Ascending aorta (tissue), 2 donors: ENCODE measurements at regions of chr18 and their contacts with region 1.

Region 1: GRCh38 chr18:79644006-79644665 is 35.5 kb upstream of the CTDP1 start:
- DNase-seq: no peak
- H3K4me3 ChIP-seq: no peak overlapping the region
- H3K27ac ChIP-seq: no peak overlapping the region
- H3K4me1 ChIP-seq: peaks cover 0 to 2% of the 10 kb centered on the region in 2 donors
- H3K27me3 ChIP-seq: no peaks in the 10 kb centered on the region
- CTCF ChIP-seq: peak; percentile 90 to 100 (median 98)

Region 2: DNA sequence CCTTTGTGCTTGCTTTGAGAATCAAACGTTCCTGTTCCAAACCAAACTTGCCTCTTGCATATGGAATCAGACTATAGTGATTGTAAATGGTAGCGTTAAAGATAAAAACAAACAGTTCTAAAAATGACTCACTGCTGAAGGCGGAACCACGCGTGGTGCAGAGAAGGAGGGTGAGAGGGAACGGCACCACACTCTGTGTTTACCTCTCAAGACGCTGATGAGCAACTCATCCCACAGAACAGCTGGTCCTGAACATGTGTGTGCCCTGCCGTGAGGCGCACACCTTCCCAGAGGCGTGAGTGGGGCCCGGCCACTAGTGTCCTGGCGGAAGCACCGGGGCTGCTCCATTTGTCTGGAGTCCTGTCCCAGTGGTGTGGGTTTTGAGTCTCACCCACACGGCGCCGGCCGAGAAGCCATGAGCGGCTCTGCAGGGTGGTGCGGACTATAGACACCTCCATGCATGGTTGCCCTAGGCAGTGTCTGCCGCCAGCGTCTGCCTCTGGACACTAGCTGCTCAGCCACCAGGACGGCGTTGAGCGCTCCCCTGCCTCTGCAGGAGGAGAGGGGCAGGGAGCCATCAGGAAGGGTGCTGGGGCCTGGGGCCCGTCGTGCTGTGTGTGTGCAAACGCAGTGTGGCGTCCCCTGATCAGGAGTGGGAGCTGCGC is 196.3 kb before region 1 on chr18:
- intact Hi-C with region 1: loop called (anchors 5 kb)
- DNase-seq: no peak
- H3K4me3 ChIP-seq: no peak overlapping the region
- H3K27ac ChIP-seq: no peak overlapping the region
- H3K4me1 ChIP-seq: peaks cover 0 to 6% of the 10 kb centered on the region in 2 donors
- H3K27me3 ChIP-seq: no peaks in the 10 kb centered on the region
- CTCF ChIP-seq: no peak

Region 3: DNA sequence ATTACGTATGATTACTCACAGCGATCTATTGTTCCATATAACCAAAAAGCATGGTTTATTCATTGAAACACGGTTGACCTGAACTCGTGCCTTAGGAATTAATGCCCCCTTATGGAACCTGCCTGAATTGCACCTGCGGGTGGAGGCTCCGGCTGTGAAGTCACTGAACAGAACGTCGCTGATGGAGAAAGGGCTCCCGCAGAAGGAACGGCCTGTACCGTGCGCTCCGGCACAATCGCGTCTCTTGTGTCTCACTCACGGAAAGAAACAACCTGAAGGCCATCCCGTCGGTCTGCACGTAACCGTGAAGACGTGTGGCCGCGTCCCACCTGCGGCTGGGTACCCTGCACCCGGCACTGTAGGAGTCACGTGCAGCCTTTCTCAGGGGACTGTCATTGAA is 115.3 kb before region 1 on chr18:
- intact Hi-C with region 1: loop called (anchors 2 kb)
- DNase-seq: peak in 1 of 2 donors; percentile 82
- H3K4me3 ChIP-seq: no peak overlapping the region
- H3K27ac ChIP-seq: no peak overlapping the region
- H3K4me1 ChIP-seq: peaks cover 5 to 13% of the 10 kb centered on the region in 2 donors
- H3K27me3 ChIP-seq: no peaks in the 10 kb centered on the region
- CTCF ChIP-seq: peak; percentile 76 to 92 (median 80)